Breast epithelium (tissue), 4 donors: ENCODE measurements at regions of chr20 and their contacts with region 1.

Region 1: GRCh38 chr20:49608743-49609670 is 41.1 kb upstream of the PTGIS start:
- DNase-seq: peak in 1 of 2 donors; percentile 79
- H3K4me3 ChIP-seq: no peak overlapping the region
- H3K27ac ChIP-seq: no peak overlapping the region
- H3K4me1 ChIP-seq: no peaks in the 10 kb centered on the region
- H3K27me3 ChIP-seq: no peaks in the 10 kb centered on the region
- CTCF ChIP-seq: peak; percentile 91 to 98 (median 97)
- POLR2A ChIP-seq: no peak

Region 2: GRCh38 chr20:49541733-49542513 is 67.1 kb before region 1 on chr20:
- intact Hi-C with region 1: loop called (anchors 10 kb)
- DNase-seq: peak; percentile 45 to 72
- H3K4me3 ChIP-seq: no peak overlapping the region
- H3K27ac ChIP-seq: no peak overlapping the region
- H3K4me1 ChIP-seq: no peaks in the 10 kb centered on the region
- H3K27me3 ChIP-seq: no peaks in the 10 kb centered on the region
- CTCF ChIP-seq: peak; percentile 89 to 97 (median 94)
- POLR2A ChIP-seq: no peak

Region 3: GRCh38 chr20:49594143-49594930 is 14.7 kb before region 1 on chr20:
- intact Hi-C with region 1: no loop called
- DNase-seq: no peak
- H3K4me3 ChIP-seq: no peak overlapping the region
- H3K27ac ChIP-seq: peak overlapping the region; percentile 68 to 88
- H3K4me1 ChIP-seq: no peaks in the 10 kb centered on the region
- H3K27me3 ChIP-seq: no peaks in the 10 kb centered on the region
- CTCF ChIP-seq: no peak
- POLR2A ChIP-seq: no peak